ENCODE measurements at regions of chr5 and their contacts with region 1.

Region 1: GRCh38 chr5:54310433-54311175 is at the start of gene ARL15:
- ATAC-seq: peak; percentile 84 to 96 (median 95)
- H3K4me3 ChIP-seq: peak within 1 kb of the TSS; percentile 50 to 88 (median 69)
- H3K27ac ChIP-seq: peak within 1 kb of the TSS; percentile 71
- H3K4me1 ChIP-seq: peaks cover 0 to 9% of the 10 kb centered on the region in 2 donors
- total RNA-seq, gene ARL15: 17.0 to 44.6 (median 22.3) TPM

Region 2: DNA sequence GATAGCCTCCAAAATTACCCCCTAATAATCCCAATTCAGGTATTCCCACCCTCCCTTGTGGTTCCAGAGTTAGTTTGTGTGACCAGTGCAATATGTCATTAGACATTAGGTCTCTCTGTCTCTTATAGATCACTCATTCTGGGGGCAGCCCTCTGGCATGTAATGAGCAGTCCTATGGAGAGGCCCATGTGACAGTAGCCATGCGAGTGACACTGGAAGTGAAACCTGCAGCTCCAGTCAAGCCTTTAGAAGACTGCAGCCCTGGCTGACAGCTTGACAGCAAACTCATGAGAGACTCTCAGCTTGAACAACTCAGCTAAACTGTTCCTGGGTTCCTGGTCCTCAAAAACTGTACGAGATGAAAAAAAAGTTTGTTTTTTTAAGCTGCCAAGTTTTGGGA is 90.9 kb after region 1 on chr5:
- in situ Hi-C with region 1: loop called in 1 of 9 experiments (anchors 25 kb)
- ATAC-seq: no peak
- H3K4me3 ChIP-seq: no peak overlapping the region
- H3K27ac ChIP-seq: no peak overlapping the region
- H3K4me1 ChIP-seq: peaks cover 0 to 5% of the 10 kb centered on the region in 2 donors

Measured in motor neuron (in vitro differentiated cells).